CD8-positive, alpha-beta T cell (primary cell): ENCODE measurements at regions of chr1 and their contacts with region 1.

Region 1: DNA sequence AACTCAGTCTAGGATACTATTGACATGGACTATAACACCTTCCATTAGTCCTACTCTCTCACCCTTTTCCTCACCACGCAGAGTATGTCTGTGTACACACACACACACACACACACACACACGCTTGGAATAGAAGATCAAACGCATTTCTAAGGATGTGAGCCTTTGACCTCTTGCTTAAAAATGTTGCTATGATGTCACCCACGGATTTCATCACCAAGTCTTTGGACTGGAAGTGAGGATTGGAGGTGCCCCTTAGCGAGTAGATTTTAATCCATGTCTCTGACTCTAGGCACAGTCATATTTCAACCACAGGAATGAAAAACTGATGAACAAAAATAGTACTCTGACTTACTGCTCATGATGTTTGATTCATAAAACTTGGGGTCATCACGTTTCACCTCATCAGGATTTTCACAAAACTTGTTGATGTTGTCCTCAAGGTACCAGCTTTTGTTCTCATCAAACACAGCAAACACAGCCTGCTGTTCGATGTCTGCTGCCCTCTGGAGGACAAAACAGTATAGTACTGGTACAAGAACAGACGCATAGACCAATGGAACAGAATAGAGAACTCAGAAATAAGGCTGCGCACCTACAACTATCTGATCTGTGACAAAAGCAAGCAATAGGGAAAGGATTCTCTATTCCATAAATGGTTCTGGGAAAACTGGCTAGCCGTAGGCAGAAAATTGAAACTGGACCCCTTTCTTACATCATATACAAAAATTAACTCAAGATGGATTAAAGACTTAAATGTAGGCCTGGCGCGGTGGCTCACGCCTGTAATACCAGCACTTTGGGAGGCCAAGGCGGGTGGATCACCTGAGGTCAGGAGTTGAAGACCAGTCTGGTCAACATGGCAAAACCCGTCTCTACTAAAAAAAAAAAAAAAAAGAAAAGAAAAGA is 39.9 kb downstream of the F5 start:
- DNase-seq: peak in 8 of 9 experiments; percentile 26 to 85 (median 52)
- ATAC-seq: peak; percentile 85
- H3K4me3 ChIP-seq: no peak overlapping the region
- H3K4me3 Mint-ChIP-seq: no peak overlapping the region
- H3K27ac ChIP-seq: no peak overlapping the region
- H3K27ac Mint-ChIP-seq: no peak overlapping the region
- H3K4me1 ChIP-seq: no peaks in the 10 kb centered on the region
- H3K4me1 Mint-ChIP-seq: no peaks in the 10 kb centered on the region
- H3K27me3 ChIP-seq: no peaks in the 10 kb centered on the region
- H3K27me3 Mint-ChIP-seq: no peaks in the 10 kb centered on the region
- CTCF ChIP-seq: peak; percentile 82

Region 2: GRCh38 chr1:168234846-168235547 is 1311.3 kb before region 1 on chr1:
- CTCF ChIA-PET with region 1: no interaction called
- POLR2A ChIA-PET with region 1: no interaction called
- intact Hi-C with region 1: loop called in 1 of 2 experiments (anchors 10 kb)
- DNase-seq: peak in 5 of 9 experiments; percentile 20 to 69 (median 36)
- ATAC-seq: peak; percentile 98
- H3K4me3 ChIP-seq: no peak overlapping the region
- H3K4me3 Mint-ChIP-seq: no peak overlapping the region
- H3K27ac ChIP-seq: no peak overlapping the region
- H3K27ac Mint-ChIP-seq: peak overlapping the region; percentile 38
- H3K4me1 ChIP-seq: peaks cover 2% of the 10 kb centered on the region
- H3K4me1 Mint-ChIP-seq: peaks cover 48% of the 10 kb centered on the region
- H3K27me3 ChIP-seq: no peaks in the 10 kb centered on the region
- H3K27me3 Mint-ChIP-seq: no peaks in the 10 kb centered on the region
- CTCF ChIP-seq: peak; percentile 56

Region 3: DNA sequence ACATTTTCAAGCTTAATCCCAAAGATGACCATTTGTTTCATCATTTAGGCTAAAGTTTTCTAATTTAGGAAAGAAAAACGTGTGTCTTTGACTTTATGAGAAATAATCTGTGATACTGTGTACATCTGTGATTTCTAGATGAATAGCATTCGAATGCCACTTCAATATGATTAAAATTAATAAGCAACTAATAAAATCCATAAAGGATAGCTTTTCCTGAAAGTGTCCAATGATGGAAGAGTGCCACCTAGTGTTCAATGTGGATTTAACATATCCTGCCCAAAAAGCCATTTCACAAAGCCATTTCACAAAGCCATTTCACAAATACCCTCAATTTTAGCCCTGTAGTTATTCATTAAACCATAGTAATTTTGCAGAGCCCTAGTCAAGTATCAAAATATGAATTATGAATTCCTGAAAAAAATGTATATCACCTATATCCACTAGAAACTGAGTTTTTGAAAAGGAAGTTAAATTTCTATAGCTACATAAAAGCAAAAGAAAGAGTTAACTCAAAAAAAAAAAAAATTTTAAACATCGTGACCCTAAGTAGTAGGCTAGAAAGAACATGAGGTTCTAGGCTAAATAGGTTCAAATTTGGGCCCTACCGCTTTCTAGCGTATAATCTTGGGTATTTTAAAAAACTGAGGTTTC is 197.8 kb before region 1 on chr1:
- CTCF ChIA-PET with region 1: no interaction called
- POLR2A ChIA-PET with region 1: no interaction called
- intact Hi-C with region 1: loop called in 1 of 2 experiments (anchors 10 kb)
- DNase-seq: peak in 4 of 9 experiments; percentile 20 to 77 (median 44)
- ATAC-seq: peak; percentile 49
- H3K4me3 ChIP-seq: no peak overlapping the region
- H3K4me3 Mint-ChIP-seq: no peak overlapping the region
- H3K27ac ChIP-seq: no peak overlapping the region
- H3K27ac Mint-ChIP-seq: no peak overlapping the region
- H3K4me1 ChIP-seq: no peaks in the 10 kb centered on the region
- H3K4me1 Mint-ChIP-seq: peaks cover 8% of the 10 kb centered on the region
- H3K27me3 ChIP-seq: no peaks in the 10 kb centered on the region
- H3K27me3 Mint-ChIP-seq: no peaks in the 10 kb centered on the region
- CTCF ChIP-seq: peak; percentile 99

Region 4: GRCh38 chr1:169472759-169473158 is 73.6 kb before region 1 on chr1:
- CTCF ChIA-PET with region 1: interaction called, 10 read pairs
- POLR2A ChIA-PET with region 1: no interaction called
- intact Hi-C with region 1: no loop called
- DNase-seq: no peak
- ATAC-seq: no peak
- H3K4me3 ChIP-seq: no peak overlapping the region
- H3K4me3 Mint-ChIP-seq: no peak overlapping the region
- H3K27ac ChIP-seq: no peak overlapping the region
- H3K27ac Mint-ChIP-seq: no peak overlapping the region
- H3K4me1 ChIP-seq: no peaks in the 10 kb centered on the region
- H3K4me1 Mint-ChIP-seq: no peaks in the 10 kb centered on the region
- H3K27me3 ChIP-seq: no peaks in the 10 kb centered on the region
- H3K27me3 Mint-ChIP-seq: no peaks in the 10 kb centered on the region
- CTCF ChIP-seq: no peak

Region 5: DNA sequence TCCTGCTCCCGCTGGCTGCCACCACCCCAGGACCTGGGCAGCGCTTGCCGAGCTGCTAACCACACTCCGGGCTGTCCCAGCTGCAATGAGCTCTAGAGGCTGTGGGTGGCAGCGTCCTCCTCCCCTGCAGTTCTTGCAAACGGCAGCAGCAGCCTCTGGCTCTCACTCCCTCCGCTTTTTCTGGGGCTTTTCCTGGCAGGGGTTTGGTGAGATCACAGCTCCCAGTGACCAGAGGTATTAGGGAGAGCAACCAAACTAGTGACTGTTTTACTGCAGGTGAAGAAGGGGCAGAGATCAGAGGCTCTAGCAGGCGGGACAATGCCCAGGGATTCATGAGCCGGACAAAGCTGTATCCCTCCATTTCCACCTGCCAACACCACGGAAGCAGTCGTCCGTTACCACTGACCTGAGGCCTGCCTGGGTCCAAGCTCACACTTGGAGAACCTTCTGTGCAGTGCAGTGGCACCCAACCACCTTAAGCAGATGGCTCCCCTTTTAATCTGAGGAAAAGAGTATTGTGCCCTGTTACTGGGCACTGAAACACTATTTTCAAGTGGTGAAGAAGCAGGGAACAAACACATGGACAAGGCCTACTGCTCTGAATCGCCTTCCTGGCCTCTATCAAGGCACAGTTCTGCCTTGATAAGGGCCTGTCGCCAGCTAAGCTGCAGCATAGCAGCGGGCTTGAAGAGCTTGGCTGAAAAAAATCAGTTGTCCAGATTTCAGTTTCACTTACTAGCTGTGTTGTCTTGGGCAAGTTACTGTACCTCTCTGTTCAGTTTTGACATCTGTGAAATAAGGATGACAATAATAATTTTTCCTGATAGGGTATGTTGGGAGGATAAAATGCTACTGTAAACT is 40.3 kb after region 1 on chr1 and contains the start of gene F5:
- CTCF ChIA-PET with region 1: interaction called, 11 read pairs
- POLR2A ChIA-PET with region 1: no interaction called
- intact Hi-C with region 1: no loop called
- DNase-seq: peak; percentile 53 to 83 (median 74)
- ATAC-seq: peak; percentile 100
- H3K4me3 ChIP-seq: peak within 1 kb of the TSS; percentile 1 to 32
- H3K4me3 Mint-ChIP-seq: peak within 1 kb of the TSS; percentile 76
- H3K27ac ChIP-seq: no peak within 1 kb of the TSS
- H3K27ac Mint-ChIP-seq: no peak within 1 kb of the TSS
- H3K4me1 ChIP-seq: peaks cover 21% of the 10 kb centered on the region
- H3K4me1 Mint-ChIP-seq: peaks cover 17% of the 10 kb centered on the region
- H3K27me3 ChIP-seq: no peaks in the 10 kb centered on the region
- H3K27me3 Mint-ChIP-seq: peaks cover 12% of the 10 kb centered on the region
- CTCF ChIP-seq: peak; percentile 70
- total RNA-seq, gene F5: 0.28 to 0.30 TPM

Region 6: DNA sequence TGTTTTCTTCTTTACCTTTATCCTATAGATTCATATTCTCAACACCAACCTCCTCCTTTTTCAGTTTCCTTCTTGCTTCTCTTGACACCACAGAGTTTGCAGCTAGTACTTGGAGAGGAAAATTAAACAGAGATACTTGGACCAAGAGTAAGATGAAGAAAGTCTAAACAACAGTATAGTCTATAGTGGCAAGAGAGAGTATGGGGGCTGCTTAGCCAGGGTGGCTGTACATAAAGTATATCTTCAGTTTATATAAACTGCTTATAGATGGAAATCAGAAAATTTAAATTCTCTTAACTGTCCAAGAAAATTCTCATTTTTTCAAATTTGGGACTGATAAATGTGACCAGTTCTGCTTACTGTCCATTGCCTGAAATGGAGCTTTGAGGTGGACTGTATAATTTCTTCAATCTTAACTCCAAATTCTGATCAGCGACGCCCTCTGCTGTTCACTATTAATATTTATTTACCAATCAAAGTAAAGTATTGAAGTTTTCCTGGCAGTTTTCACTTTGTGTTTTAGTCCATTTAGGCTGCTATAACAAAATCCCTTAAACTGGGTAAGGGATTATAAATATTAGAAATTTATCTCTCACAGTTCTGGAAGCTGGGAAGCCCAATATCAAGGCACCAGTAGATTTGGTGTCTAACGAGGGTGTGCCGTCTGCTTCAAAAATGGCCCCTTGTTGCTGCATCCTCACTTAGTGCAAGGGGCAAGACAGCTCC is 263.2 kb after region 1 on chr1:
- CTCF ChIA-PET with region 1: interaction called, 26 read pairs
- POLR2A ChIA-PET with region 1: no interaction called
- intact Hi-C with region 1: loop called in 1 of 2 experiments (anchors 1 kb)
- DNase-seq: peak in 3 of 9 experiments; percentile 34 to 59 (median 52)
- ATAC-seq: no peak
- H3K4me3 ChIP-seq: no peak overlapping the region
- H3K4me3 Mint-ChIP-seq: no peak overlapping the region
- H3K27ac ChIP-seq: no peak overlapping the region
- H3K27ac Mint-ChIP-seq: no peak overlapping the region
- H3K4me1 ChIP-seq: no peaks in the 10 kb centered on the region
- H3K4me1 Mint-ChIP-seq: peaks cover 2% of the 10 kb centered on the region
- H3K27me3 ChIP-seq: no peaks in the 10 kb centered on the region
- H3K27me3 Mint-ChIP-seq: no peaks in the 10 kb centered on the region
- CTCF ChIP-seq: peak; percentile 71